GM12878 (cell line): ENCODE measurements at regions of chr2 and their contacts with region 1.

Region 1: GRCh38 chr2:136207030-136207623 is 89.2 kb upstream of the CXCR4 start:
- DNase-seq: peak; percentile 68
- ATAC-seq: peak; percentile 79
- H3K4me3 ChIP-seq: no peak overlapping the region
- H3K27ac ChIP-seq: no peak overlapping the region
- H3K4me1 ChIP-seq: peaks cover 21% of the 10 kb centered on the region
- H3K27me3 ChIP-seq: no peaks in the 10 kb centered on the region; a peak in 1 of 4 replicates
- CTCF ChIP-seq: no peak
- EP300 ChIP-seq: peak; percentile 26 to 55; a peak in 2 of 4 replicates
- POLR2A ChIP-seq: no peak
- RAD21 ChIP-seq: 0 out of 2 replicates have a peak, but pooled peaks have one; percentile 0

Region 2: GRCh38 chr2:135913727-135914365 is 293.3 kb before region 1 on chr2:
- CTCF ChIA-PET with region 1: no interaction called
- POLR2A ChIA-PET with region 1: no interaction called
- RAD21 ChIA-PET with region 1: interaction called, 8 read pairs
- SMC1A ChIA-PET with region 1: interaction called, 8 read pairs
- in situ Hi-C with region 1: no loop called
- intact Hi-C with region 1: loop called (anchors 5 kb)
- DNase-seq: no peak
- ATAC-seq: peak; percentile 75
- H3K4me3 ChIP-seq: no peak overlapping the region
- H3K27ac ChIP-seq: no peak overlapping the region
- H3K4me1 ChIP-seq: no peaks in the 10 kb centered on the region
- H3K27me3 ChIP-seq: no peaks in the 10 kb centered on the region
- CTCF ChIP-seq: peak; percentile 58 to 68 (median 63); a peak in 5 of 6 replicates
- EP300 ChIP-seq: no peak
- POLR2A ChIP-seq: no peak
- RAD21 ChIP-seq: peak; percentile 75

Region 3: DNA sequence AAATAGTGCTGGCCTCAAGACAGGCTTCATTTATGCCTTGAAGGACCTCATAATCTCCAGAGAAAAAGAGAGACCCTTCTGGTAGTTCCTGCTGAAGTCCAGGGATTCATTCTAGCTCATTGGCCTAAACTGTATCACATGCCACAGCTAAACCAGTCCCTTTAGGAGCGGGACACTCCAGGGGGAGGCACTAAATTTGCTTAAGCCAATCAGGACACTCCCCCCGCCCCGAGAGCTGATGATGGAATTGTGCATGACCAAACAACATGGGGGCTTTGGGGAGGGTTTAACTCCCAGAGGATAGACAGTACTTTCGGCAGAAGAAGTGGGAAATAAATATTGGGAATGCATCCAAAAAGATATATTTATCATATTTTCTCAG is 52.7 kb before region 1 on chr2:
- CTCF ChIA-PET with region 1: no interaction called
- POLR2A ChIA-PET with region 1: interaction called, 3 read pairs
- RAD21 ChIA-PET with region 1: no interaction called
- SMC1A ChIA-PET with region 1: interaction called, 19 read pairs
- in situ Hi-C with region 1: no loop called
- intact Hi-C with region 1: no loop called
- DNase-seq: no peak
- ATAC-seq: no peak
- H3K4me3 ChIP-seq: no peak overlapping the region
- H3K27ac ChIP-seq: no peak overlapping the region
- H3K4me1 ChIP-seq: no peaks in the 10 kb centered on the region
- H3K27me3 ChIP-seq: peaks cover 0 to 2% of the 10 kb centered on the region in 2 experiments; a peak in 3 of 4 replicates
- CTCF ChIP-seq: no peak
- EP300 ChIP-seq: no peak
- POLR2A ChIP-seq: no peak
- RAD21 ChIP-seq: no peak

Region 4: GRCh38 chr2:136238286-136239078 is 31.4 kb after region 1 on chr2:
- CTCF ChIA-PET with region 1: interaction called, 4 read pairs
- POLR2A ChIA-PET with region 1: interaction called, 56 read pairs
- RAD21 ChIA-PET with region 1: interaction called, 39 read pairs
- SMC1A ChIA-PET with region 1: interaction called, 64 read pairs
- in situ Hi-C with region 1: no loop called
- intact Hi-C with region 1: no loop called
- DNase-seq: peak; percentile 78
- ATAC-seq: peak; percentile 89
- H3K4me3 ChIP-seq: no peak overlapping the region
- H3K27ac ChIP-seq: no peak overlapping the region
- H3K4me1 ChIP-seq: peaks cover 18% of the 10 kb centered on the region
- H3K27me3 ChIP-seq: no peaks in the 10 kb centered on the region
- CTCF ChIP-seq: no peak
- EP300 ChIP-seq: peak; percentile 97 to 99
- POLR2A ChIP-seq: no peak
- RAD21 ChIP-seq: no peak

Region 5: GRCh38 chr2:136281281-136282114 is 74.4 kb after region 1 on chr2:
- CTCF ChIA-PET with region 1: interaction called, 3 read pairs
- POLR2A ChIA-PET with region 1: interaction called, 4 read pairs
- RAD21 ChIA-PET with region 1: interaction called, 17 read pairs
- SMC1A ChIA-PET with region 1: interaction called, 3 read pairs
- in situ Hi-C with region 1: no loop called
- intact Hi-C with region 1: no loop called
- DNase-seq: peak; percentile 25
- ATAC-seq: peak; percentile 85
- H3K4me3 ChIP-seq: no peak overlapping the region
- H3K27ac ChIP-seq: no peak overlapping the region
- H3K4me1 ChIP-seq: peaks cover 22% of the 10 kb centered on the region
- H3K27me3 ChIP-seq: no peaks in the 10 kb centered on the region; a peak in 1 of 4 replicates
- CTCF ChIP-seq: no peak
- EP300 ChIP-seq: no peak
- POLR2A ChIP-seq: no peak
- RAD21 ChIP-seq: no peak

Region 6: GRCh38 chr2:136327162-136327852 is 120.2 kb after region 1 on chr2:
- CTCF ChIA-PET with region 1: interaction called, 4 read pairs
- POLR2A ChIA-PET with region 1: interaction called, 7 read pairs
- RAD21 ChIA-PET with region 1: interaction called, 14 read pairs
- SMC1A ChIA-PET with region 1: interaction called, 12 read pairs
- in situ Hi-C with region 1: no loop called
- intact Hi-C with region 1: loop called (anchors 2 kb)
- DNase-seq: peak; percentile 71
- ATAC-seq: peak; percentile 89
- H3K4me3 ChIP-seq: peak overlapping the region; percentile 37; the same call in 1 of the 2 replicates
- H3K27ac ChIP-seq: no peak overlapping the region
- H3K4me1 ChIP-seq: peaks cover 26% of the 10 kb centered on the region
- H3K27me3 ChIP-seq: 0 out of 4 replicates have a peak, but pooled peaks cover 0 to 2% of the 10 kb centered on the region in 2 experiments
- CTCF ChIP-seq: no peak
- EP300 ChIP-seq: peak; percentile 95 to 96; a peak in 3 of 4 replicates
- POLR2A ChIP-seq: no peak
- RAD21 ChIP-seq: no peak